ENCODE measurements at regions of chr19 and their contacts with region 1.

Region 1: GRCh38 chr19:12796146-12797071 is 5.1 kb downstream of the JUNB start:
- DNase-seq: peak; percentile 84
- H3K4me3 Mint-ChIP-seq: peak overlapping the region; percentile 62
- H3K27ac Mint-ChIP-seq: peak overlapping the region; percentile 83
- H3K4me1 Mint-ChIP-seq: peaks cover 35% of the 10 kb centered on the region
- H3K27me3 Mint-ChIP-seq: no peaks in the 10 kb centered on the region

Region 2: DNA sequence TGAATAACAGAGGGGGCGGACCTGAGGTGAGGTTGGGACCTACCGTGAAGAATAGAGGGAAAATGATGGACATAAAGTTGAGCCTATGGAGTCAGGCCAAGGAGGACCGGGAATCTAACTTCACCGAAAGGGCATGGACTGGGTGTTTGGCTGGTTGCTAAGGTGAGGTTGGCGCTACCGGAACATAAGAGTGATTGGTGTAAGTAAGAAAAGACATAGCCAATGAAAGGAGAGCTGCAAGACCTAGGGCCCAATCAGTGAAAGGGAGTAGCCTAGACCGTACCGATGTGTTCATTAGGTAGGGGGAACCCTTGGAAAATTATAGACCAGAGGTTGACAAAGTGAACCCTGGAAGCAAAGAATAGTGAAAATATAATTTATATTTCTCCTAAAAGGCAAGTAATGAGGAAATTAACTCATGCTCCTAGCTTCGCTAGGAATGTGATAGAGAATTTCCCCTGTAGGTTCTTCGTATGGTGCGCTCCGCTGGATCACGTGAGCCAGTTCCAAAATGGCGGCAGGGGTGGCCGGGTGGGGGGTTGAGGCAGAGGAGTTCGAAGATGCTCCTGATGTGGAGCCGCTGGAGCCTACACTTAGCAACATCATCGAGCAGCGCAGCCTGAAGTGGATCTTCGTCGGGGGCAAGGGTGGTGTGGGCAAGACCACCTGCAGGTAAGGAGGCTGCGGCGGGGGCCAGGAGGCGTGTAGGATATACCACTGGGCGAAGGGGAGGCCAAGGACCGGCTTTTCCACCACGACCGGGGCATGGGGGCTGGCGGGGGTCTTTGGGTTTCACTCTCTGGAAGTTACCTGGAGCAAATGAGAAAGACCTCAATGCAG is 59.2 kb before region 1 on chr19 and contains the start of gene GET3:
- CTCF ChIA-PET with region 1: interaction called, 10 read pairs
- POLR2A ChIA-PET with region 1: interaction called, 10 read pairs
- intact Hi-C with region 1: loop called (anchors 2 kb)
- DNase-seq: peak; percentile 88
- H3K4me3 Mint-ChIP-seq: peak within 1 kb of the TSS; percentile 100
- H3K27ac Mint-ChIP-seq: peak within 1 kb of the TSS; percentile 93
- H3K4me1 Mint-ChIP-seq: peaks cover 33% of the 10 kb centered on the region
- H3K27me3 Mint-ChIP-seq: no peaks in the 10 kb centered on the region
- total RNA-seq, gene GET3: 54.2 TPM

Region 3: GRCh38 chr19:12777217-12778016 is 19.0 kb before region 1 on chr19:
- CTCF ChIA-PET with region 1: interaction called, 372 read pairs
- POLR2A ChIA-PET with region 1: interaction called, 89 read pairs
- intact Hi-C with region 1: loop called (anchors 1 kb)
- DNase-seq: peak; percentile 87
- H3K4me3 Mint-ChIP-seq: peak overlapping the region; percentile 76
- H3K27ac Mint-ChIP-seq: peak overlapping the region; percentile 87
- H3K4me1 Mint-ChIP-seq: peaks cover 40% of the 10 kb centered on the region
- H3K27me3 Mint-ChIP-seq: no peaks in the 10 kb centered on the region

Region 4: DNA sequence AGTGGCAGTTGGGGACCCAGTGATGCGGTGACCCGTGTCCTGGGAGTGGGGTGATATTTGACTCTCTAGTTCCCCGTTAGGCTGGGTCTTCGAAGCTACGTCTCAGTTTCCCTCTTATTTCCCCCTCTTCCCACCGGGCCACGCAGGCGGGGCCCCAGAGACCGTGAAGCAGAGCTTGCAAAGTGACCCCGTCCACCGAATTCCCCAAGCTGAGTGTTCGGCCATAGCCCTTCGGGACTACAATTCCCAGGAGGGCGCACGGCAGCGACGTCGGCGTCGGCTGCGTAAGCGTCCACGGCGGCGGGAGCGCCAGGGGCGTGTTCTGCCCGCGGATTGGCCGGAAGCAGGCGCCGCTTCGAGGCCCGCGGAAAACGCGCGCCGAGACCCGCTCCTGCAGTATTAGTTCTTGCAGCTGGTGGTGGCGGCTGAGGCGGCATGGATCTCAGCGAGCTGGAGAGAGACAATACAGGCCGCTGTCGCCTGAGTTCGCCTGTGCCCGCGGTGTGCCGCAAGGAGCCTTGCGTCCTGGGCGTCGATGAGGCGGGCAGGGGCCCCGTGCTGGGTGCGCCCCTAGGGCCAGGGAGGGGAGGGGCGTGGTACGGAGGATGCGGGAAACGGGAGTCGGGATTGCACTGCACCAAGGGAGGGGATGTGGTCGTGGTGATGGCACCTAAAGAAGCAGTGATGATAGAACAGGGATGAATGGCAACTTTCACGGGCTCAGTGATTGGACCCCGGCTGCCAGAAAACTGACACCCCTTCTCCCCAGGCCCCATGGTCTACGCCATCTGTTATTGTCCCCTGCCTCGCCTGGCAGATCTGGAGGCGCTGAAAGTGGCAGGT is 10.1 kb after region 1 on chr19 and contains the start of gene RNASEH2A:
- CTCF ChIA-PET with region 1: interaction called, 27 read pairs
- POLR2A ChIA-PET with region 1: interaction called, 5 read pairs
- intact Hi-C with region 1: no loop called
- DNase-seq: peak; percentile 93
- H3K4me3 Mint-ChIP-seq: peak within 1 kb of the TSS; percentile 92
- H3K27ac Mint-ChIP-seq: peak within 1 kb of the TSS; percentile 83
- H3K4me1 Mint-ChIP-seq: peaks cover 20% of the 10 kb centered on the region
- H3K27me3 Mint-ChIP-seq: no peaks in the 10 kb centered on the region
- total RNA-seq, gene RNASEH2A: 61.9 to 66.8 TPM

Region 5: GRCh38 chr19:12924616-12925276 is 128.3 kb after region 1 on chr19:
- CTCF ChIA-PET with region 1: no interaction called
- POLR2A ChIA-PET with region 1: no interaction called
- intact Hi-C with region 1: no loop called
- DNase-seq: no peak
- H3K4me3 Mint-ChIP-seq: no peak overlapping the region
- H3K27ac Mint-ChIP-seq: no peak overlapping the region
- H3K4me1 Mint-ChIP-seq: peaks cover 2% of the 10 kb centered on the region
- H3K27me3 Mint-ChIP-seq: no peaks in the 10 kb centered on the region